ENCODE measurements at regions of chr12 and their contacts with region 1.

Region 1: GRCh38 chr12:46825591-46826414 is at the start of gene SLC38A4:
- DNase-seq: no peak
- H3K4me3 ChIP-seq: no peak within 1 kb of the TSS
- CTCF ChIP-seq: peak in 1 of 3 donors; percentile 30
- POLR2A ChIP-seq: no peak
- total RNA-seq, gene SLC38A4: 0.46 to 1.9 (median 0.88) TPM

Region 2: DNA sequence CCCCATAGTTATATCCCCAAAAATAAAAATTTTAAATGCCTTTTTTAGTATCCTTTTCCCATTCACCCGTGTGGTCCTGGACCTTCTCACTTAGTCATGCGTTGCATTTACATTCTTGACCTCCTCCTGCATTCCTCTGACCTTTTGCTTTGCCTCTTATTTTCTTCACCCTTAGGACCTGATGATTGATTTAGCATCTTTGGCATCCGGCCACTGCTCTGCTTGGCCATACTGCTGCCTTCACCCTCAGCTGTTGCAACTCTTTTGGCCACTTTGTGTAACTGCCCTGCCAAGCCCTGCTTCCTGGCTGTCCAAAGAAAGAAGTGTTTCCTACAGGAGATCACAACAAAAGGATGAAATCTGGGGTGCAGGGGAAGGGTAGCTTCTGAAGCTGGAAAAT is 48.8 kb after region 1 on chr12:
- intact Hi-C with region 1: loop called (anchors 1 kb)
- DNase-seq: no peak
- H3K4me3 ChIP-seq: no peak overlapping the region
- CTCF ChIP-seq: no peak
- POLR2A ChIP-seq: no peak

Measured in lower leg skin (tissue), 4 donors.